ENCODE measurements at regions of chr12 and their contacts with region 1.

Region 1: GRCh38 chr12:3135522-3136461 is 58.6 kb downstream of the TSPAN9 start:
- DNase-seq: peak; percentile 83 to 89
- ATAC-seq: peak; percentile 84 to 92
- H3K4me3 ChIP-seq: no peak overlapping the region
- H3K27ac ChIP-seq: no peak overlapping the region; a peak in 1 of 6 replicates
- H3K4me1 ChIP-seq: peaks cover 11% of the 10 kb centered on the region; the same call in 1 of the 3 replicates
- CTCF ChIP-seq: peak; percentile 79
- EP300 ChIP-seq: no peak
- POLR2A ChIP-seq: no peak
- RAD21 ChIP-seq: peak; percentile 93

Region 2: GRCh38 chr12:3073438-3074250 is 62.1 kb before region 1 on chr12:
- CTCF ChIA-PET with region 1: interaction called, 34 read pairs
- POLR2A ChIA-PET with region 1: no interaction called
- DNase-seq: peak; percentile 89 to 92
- ATAC-seq: peak; percentile 49 to 72; a peak in 5 of 6 replicates
- H3K4me3 ChIP-seq: no peak overlapping the region
- H3K27ac ChIP-seq: no peak overlapping the region
- H3K4me1 ChIP-seq: peaks cover 11% of the 10 kb centered on the region; the same call in 2 of the 3 replicates
- CTCF ChIP-seq: peak; percentile 95
- EP300 ChIP-seq: no peak
- POLR2A ChIP-seq: no peak
- RAD21 ChIP-seq: peak; percentile 73 to 82

Region 3: GRCh38 chr12:3122835-3123678 is 12.7 kb before region 1 on chr12:
- CTCF ChIA-PET with region 1: interaction called, 70 read pairs
- POLR2A ChIA-PET with region 1: no interaction called
- DNase-seq: no peak
- ATAC-seq: peak; percentile 31 to 42; a peak in 3 of 6 replicates
- H3K4me3 ChIP-seq: no peak overlapping the region
- H3K27ac ChIP-seq: no peak overlapping the region
- H3K4me1 ChIP-seq: no peaks in the 10 kb centered on the region
- CTCF ChIP-seq: no peak
- EP300 ChIP-seq: no peak
- POLR2A ChIP-seq: no peak
- RAD21 ChIP-seq: no peak

Region 4: GRCh38 chr12:3168223-3169221 is 32.7 kb after region 1 on chr12:
- CTCF ChIA-PET with region 1: interaction called, 53 read pairs
- POLR2A ChIA-PET with region 1: no interaction called
- DNase-seq: peak; percentile 86 to 88
- ATAC-seq: peak; percentile 88 to 89
- H3K4me3 ChIP-seq: peak overlapping the region; percentile 1; the same call in 1 of the 3 replicates
- H3K27ac ChIP-seq: peak overlapping the region; percentile 78 to 87
- H3K4me1 ChIP-seq: peaks cover 44% of the 10 kb centered on the region
- CTCF ChIP-seq: no peak
- EP300 ChIP-seq: peak in 1 of 2 experiments; percentile 27; a peak in 1 of 5 replicates
- POLR2A ChIP-seq: no peak
- RAD21 ChIP-seq: no peak

Region 5: DNA sequence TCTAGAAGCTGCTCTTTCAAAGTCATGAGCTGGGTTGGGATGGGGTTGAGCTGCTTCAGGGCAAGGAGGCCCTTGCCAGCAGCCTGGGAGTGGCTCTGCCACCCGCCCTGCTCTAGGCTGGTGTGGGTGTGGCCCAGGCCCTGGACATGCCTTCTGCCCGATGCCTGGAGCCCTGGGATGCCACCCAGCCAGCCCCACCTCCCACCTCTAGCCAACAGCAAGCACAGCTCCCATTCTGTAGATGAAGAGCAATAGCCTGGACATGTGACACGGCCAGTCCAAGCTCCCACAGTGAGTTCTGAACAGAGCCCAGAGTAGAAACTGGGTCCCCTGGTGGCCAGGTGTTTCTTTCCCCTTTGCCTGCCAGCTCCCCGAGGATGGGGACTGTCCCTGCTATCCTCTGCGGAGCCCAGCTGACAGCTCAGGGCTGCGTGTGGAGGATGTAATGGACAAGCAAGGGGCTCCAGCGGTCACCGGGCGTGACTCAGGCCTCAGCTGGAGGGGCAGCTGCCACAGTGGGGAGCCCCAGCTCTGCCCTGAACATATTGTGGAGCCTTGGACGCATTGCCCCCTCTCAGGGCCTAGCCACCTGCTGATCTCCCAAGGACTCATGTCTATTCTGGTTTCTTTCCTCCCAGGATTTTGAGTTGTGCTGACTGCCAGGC is 106.5 kb after region 1 on chr12:
- CTCF ChIA-PET with region 1: interaction called, 14 read pairs
- POLR2A ChIA-PET with region 1: no interaction called
- DNase-seq: peak in 1 of 2 experiments; percentile 7
- ATAC-seq: peak; percentile 36 to 74; a peak in 4 of 6 replicates
- H3K4me3 ChIP-seq: no peak overlapping the region
- H3K27ac ChIP-seq: no peak overlapping the region
- H3K4me1 ChIP-seq: peaks cover 3% of the 10 kb centered on the region; the same call in 1 of the 3 replicates
- CTCF ChIP-seq: no peak
- EP300 ChIP-seq: no peak
- POLR2A ChIP-seq: no peak
- RAD21 ChIP-seq: no peak